Activated naive CD4-positive, alpha-beta T cell treated with anti-CD3 and anti-CD28 coated beads, Interleukin-2, amount 10 ng/mL, durations not matched to agents 7 days and 5 days (primary cell): ENCODE measurements at regions of chr10 and their contacts with region 1.

Region 1: DNA sequence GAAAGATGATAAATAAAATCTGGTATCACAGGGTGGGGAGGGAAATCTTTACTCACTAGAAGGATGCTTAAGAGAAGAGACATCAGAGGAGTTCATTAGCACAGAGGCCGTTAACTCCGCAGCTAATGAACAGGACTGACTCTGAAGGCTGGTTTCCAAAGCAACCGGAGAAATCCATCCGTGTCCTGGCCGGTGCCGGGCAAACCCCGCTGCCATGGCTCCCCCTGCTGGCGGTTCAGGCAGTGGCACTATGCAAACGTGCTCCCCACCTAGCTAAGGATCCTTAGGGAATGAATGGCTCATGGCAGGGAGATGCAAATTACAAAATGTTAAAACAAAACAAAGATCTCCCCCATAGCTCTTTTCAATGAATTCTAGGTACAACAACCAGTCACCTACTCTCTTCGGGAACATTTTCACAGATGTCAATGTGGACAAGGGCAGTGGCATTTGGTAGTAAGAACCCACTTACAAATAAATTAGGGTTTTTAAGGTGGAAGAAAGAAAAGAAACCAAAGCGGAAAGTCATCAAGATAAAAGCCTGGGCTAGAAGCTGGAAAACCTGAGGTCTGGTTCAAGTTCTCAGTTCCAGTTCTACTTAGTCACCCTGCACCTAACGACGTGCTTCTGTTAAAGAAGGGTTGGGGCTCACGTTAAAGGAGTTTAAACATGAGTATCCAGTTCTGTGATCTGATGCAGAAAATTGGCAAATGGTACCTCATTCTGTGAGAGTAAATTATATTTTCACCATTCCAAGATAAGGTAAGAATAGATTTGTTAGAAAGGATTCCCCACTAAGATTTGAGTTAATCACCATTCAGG is 138.2 kb downstream of the SVIL start:
- DNase-seq: peak; percentile 74
- H3K4me3 Mint-ChIP-seq: no peak overlapping the region
- H3K27ac Mint-ChIP-seq: no peak overlapping the region
- H3K4me1 Mint-ChIP-seq: peaks cover 2% of the 10 kb centered on the region
- H3K27me3 Mint-ChIP-seq: no peaks in the 10 kb centered on the region

Region 2: GRCh38 chr10:29446327-29446726 is 50.2 kb before region 1 on chr10:
- CTCF ChIA-PET with region 1: interaction called, 28 read pairs
- DNase-seq: no peak
- H3K4me3 Mint-ChIP-seq: no peak overlapping the region
- H3K27ac Mint-ChIP-seq: no peak overlapping the region
- H3K4me1 Mint-ChIP-seq: peaks cover 10% of the 10 kb centered on the region
- H3K27me3 Mint-ChIP-seq: no peaks in the 10 kb centered on the region

Region 3: GRCh38 chr10:29486433-29486832 is 10.1 kb before region 1 on chr10:
- CTCF ChIA-PET with region 1: interaction called, 14 read pairs
- DNase-seq: no peak
- H3K4me3 Mint-ChIP-seq: no peak overlapping the region
- H3K27ac Mint-ChIP-seq: no peak overlapping the region
- H3K4me1 Mint-ChIP-seq: peaks cover 46% of the 10 kb centered on the region
- H3K27me3 Mint-ChIP-seq: no peaks in the 10 kb centered on the region